Posterior vena cava (tissue), 2 donors: ENCODE measurements at regions of chr2 and their contacts with region 1.

Region 1: GRCh38 chr2:237171396-237171795 is 85.7 kb downstream of the COPS8 start:
- DNase-seq: no peak

Region 2: DNA sequence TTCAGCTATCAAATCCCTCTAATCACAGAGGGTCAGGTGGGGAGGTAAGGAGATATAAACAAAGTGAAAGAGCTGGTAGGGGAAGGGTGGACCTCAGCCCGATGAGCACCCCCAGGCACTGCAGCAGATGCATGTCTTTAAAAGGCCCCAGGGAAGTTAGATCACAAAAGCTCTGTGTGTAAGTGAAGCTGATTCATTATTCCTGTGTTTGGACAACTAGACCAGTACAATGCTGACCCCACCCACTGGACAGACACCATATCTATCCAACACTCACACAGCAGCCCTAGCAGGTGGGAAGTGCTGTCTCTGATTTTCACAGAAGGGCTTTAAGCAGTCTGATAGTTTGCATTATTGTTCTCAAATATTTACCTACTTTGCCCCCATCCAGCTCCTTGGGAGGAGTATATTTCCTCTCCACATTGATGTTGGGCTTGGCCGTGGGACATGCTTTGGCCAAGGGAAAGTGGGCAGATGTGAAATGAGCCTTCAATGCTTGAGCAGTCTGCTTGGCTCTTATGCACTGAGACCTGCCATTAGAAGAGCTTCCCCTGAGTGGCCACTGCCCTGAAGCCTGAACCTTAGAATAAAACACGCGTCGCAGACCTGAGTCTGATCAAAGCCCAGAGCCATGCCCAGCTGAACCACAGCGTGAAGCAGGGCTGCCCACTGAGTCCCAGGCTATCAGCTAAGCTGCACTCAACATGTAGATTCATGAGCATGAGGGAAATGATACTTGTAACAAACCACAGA is 25.6 kb after region 1 on chr2:
- intact Hi-C with region 1: no loop called
- DNase-seq: no peak

Region 3: DNA sequence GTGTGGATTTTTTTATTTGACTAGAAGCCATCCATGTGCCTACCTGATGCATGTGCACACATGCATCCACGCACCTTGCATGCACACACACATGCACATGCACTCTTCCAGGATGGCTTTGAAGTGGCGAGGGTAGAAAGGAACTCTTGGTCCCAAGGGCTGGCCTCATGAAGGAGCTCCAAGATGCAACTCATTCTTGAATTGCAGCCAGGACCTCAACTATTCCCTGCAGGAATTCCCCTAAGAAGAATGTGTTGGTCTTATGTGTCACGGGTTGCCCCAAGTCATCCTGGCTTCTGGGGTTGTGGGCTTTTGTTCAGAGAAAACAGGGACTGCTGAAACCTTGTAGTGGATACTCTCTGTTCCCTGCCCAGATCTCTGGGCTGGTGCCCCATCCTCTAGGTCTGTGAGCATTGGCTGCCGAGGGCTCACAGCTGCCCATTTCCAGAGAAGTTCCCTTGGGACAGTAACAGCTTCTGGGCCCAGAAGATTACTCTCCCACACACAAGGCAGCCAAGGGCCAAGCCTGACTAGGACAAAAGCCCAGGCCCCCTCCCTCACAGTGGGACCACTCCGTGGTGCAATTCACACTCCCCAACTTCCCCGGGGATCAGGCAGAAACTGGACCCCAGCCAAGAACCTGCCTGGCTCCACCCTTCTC is 51.9 kb after region 1 on chr2:
- intact Hi-C with region 1: loop called in 1 of 2 experiments (anchors 10 kb)
- DNase-seq: peak; percentile 86

Region 4: GRCh38 chr2:237408335-237409000 is 237.1 kb after region 1 on chr2:
- intact Hi-C with region 1: loop called in 1 of 2 experiments (anchors 10 kb)
- DNase-seq: peak; percentile 87

Region 5: GRCh38 chr2:238929242-238930081 is 1758.1 kb after region 1 on chr2:
- intact Hi-C with region 1: loop called in 1 of 2 experiments (anchors 10 kb)
- DNase-seq: peak; percentile 86